ENCODE measurements at regions of chr17 and their contacts with region 1.

Region 1: GRCh38 chr17:35175638-35176415 is 18.4 kb downstream of the SLC35G3 start:
- DNase-seq: peak in 1 of 35 experiments; percentile 10
- ATAC-seq: no peak
- H3K4me3 ChIP-seq: no peak overlapping the region
- H3K4me3 Mint-ChIP-seq: peak overlapping the region in 1 of 3 donors; percentile 26
- H3K27ac ChIP-seq: no peak overlapping the region
- H3K27ac Mint-ChIP-seq: peak overlapping the region; percentile 93 to 95
- H3K4me1 ChIP-seq: peaks cover 28 to 56% of the 10 kb centered on the region in 2 experiments
- H3K4me1 Mint-ChIP-seq: peaks cover 75 to 91% (median 82%) of the 10 kb centered on the region in 3 donors
- H3K27me3 ChIP-seq: no peaks in the 10 kb centered on the region
- H3K27me3 Mint-ChIP-seq: no peaks in the 10 kb centered on the region

Region 2: DNA sequence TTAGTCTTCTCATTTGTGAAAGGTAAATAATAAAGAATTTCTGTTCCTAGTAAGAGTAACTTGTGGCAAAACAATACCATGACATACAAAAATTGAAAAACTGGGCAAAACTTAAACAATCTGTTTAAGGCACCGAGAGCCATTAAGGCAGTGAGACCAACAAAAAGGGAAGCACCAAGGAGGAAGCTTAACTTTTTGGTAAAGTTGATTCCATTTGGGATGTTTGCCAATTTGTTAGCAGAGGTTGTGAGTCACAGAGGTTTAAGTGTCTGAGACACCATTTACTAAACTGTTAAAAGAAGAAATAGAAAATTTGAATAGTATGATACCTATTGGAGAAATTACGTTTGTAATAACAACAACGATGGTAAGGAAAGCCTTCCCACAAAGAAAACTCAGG is 13.5 kb after region 1 on chr17:
- CTCF ChIA-PET with region 1: no interaction called
- POLR2A ChIA-PET with region 1: no interaction called
- DNase-seq: no peak
- ATAC-seq: no peak
- H3K4me3 ChIP-seq: peak overlapping the region in 1 of 2 donors; percentile 32
- H3K4me3 Mint-ChIP-seq: peak overlapping the region; percentile 17 to 63 (median 61)
- H3K27ac ChIP-seq: no peak overlapping the region
- H3K27ac Mint-ChIP-seq: peak overlapping the region; percentile 86 to 90
- H3K4me1 ChIP-seq: peaks cover 30 to 46% of the 10 kb centered on the region in 2 experiments
- H3K4me1 Mint-ChIP-seq: peaks cover 68 to 76% (median 72%) of the 10 kb centered on the region in 3 donors
- H3K27me3 ChIP-seq: no peaks in the 10 kb centered on the region
- H3K27me3 Mint-ChIP-seq: peaks cover 0 to 1% of the 10 kb centered on the region in 2 donors

Region 3: DNA sequence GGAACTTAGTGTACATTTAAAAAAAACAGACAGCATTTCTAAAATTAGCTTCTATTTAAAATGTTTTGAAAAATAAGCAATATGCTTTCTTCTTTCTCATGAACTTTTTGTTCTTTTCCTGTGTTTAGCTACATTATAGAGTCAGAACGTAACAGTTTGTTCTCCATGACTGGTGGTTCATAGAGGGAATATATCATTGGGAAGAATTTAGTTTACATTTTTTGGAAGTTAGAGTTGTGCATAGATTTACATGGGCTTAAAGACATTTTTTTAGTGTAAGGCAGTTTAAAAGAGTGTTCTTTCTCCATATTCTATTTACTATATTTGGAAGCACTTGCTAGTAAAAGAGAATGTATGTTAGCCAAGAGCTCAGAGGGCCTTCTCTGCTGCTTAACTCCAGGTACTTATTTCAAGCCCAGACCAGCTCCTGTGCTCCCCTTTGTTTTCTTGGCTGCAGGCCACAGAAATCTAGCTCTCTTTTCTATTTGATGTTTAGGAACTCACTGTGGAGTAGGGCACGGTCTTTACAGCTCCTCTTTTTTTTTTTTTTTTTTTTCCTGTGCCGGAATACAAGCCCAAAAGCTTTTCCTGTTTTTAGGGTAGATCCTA is 431.5 kb after region 1 on chr17:
- CTCF ChIA-PET with region 1: no interaction called
- POLR2A ChIA-PET with region 1: interaction called in 1 of 2 experiments, 13 read pairs
- DNase-seq: no peak
- ATAC-seq: no peak
- H3K4me3 ChIP-seq: no peak overlapping the region
- H3K4me3 Mint-ChIP-seq: no peak overlapping the region
- H3K27ac ChIP-seq: no peak overlapping the region
- H3K27ac Mint-ChIP-seq: no peak overlapping the region
- H3K4me1 ChIP-seq: no peaks in the 10 kb centered on the region
- H3K4me1 Mint-ChIP-seq: peaks cover 0 to 2% (median under 1%) of the 10 kb centered on the region in 3 donors
- H3K27me3 ChIP-seq: no peaks in the 10 kb centered on the region
- H3K27me3 Mint-ChIP-seq: no peaks in the 10 kb centered on the region